MCF 10A (cell line): ENCODE measurements at regions of chr18 and their contacts with region 1.

Region 1: DNA sequence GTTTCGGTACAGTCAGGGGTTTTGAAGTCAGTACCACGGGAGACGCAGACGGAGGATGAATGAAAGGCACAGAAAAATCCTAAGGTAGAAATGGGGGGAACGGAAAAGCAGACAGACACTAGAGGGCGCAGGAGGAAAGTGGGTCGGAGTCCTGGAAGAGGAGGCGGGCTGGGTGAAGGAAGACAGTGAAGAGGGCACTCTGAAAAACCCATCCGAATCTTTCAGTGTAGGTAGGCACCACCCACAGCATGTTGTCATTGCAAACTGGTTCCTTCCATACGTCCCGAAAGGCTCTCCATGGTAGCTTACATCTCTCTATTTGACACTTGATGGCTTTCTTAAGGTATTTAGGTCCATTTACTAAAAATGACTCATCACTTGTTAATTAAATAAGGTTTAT is 18.5 kb upstream of the ZNF236 start:
- DNase-seq: peak; percentile 84
- H3K4me3 Mint-ChIP-seq: no peak overlapping the region
- H3K27ac Mint-ChIP-seq: no peak overlapping the region
- H3K4me1 Mint-ChIP-seq: peaks cover 29% of the 10 kb centered on the region
- H3K27me3 Mint-ChIP-seq: no peaks in the 10 kb centered on the region
- CTCF ChIP-seq: peak; percentile 74

Region 2: DNA sequence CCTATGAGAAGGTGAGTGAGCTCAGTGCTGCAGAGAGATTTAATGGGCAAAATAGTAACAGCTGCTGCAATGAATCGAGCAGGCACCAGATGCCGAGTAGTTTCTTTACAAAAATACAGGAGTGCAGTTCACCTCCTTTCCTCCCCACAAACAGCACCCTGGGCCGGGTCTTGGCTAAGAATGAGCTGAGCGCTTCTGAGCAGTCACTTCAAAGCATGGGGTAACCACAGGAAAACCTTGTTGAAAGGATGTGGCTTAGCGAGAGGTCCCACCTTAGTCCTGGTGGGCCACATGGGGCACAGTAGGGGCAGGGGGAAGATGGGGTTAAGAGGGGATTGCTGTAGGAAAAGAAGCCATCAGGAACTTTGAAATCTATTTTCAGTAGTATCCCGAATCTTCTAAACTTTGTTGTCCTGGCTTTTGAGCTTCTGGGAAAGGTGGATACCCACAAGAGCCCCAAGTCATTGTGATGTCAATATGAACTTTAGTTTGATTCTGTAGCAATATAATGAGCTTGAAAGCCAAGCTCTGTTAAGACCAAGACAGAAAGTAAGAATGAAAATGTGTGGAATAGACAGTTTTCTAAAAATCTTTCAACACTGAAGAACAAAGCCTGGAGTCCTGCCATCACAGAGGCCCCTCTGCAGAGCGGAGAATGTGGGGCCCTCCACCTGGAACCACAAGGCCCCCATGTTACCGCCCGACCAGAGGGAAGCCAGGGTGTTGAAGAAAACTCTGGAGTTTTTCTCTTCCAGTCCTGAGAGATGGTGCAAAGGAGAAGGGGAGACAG is 82.4 kb before region 1 on chr18:
- CTCF ChIA-PET with region 1: no interaction called
- POLR2A ChIA-PET with region 1: no interaction called
- intact Hi-C with region 1: no loop called
- DNase-seq: no peak
- H3K4me3 Mint-ChIP-seq: no peak overlapping the region
- H3K27ac Mint-ChIP-seq: no peak overlapping the region
- H3K4me1 Mint-ChIP-seq: no peaks in the 10 kb centered on the region
- H3K27me3 Mint-ChIP-seq: no peaks in the 10 kb centered on the region
- CTCF ChIP-seq: no peak

Region 3: GRCh38 chr18:76791106-76791505 is 12.7 kb before region 1 on chr18:
- CTCF ChIA-PET with region 1: interaction called, 57 read pairs
- POLR2A ChIA-PET with region 1: interaction called, 3 read pairs
- intact Hi-C with region 1: no loop called
- DNase-seq: no peak
- H3K4me3 Mint-ChIP-seq: no peak overlapping the region
- H3K27ac Mint-ChIP-seq: no peak overlapping the region
- H3K4me1 Mint-ChIP-seq: peaks cover 4% of the 10 kb centered on the region
- H3K27me3 Mint-ChIP-seq: peaks cover 2% of the 10 kb centered on the region
- CTCF ChIP-seq: no peak

Region 4: DNA sequence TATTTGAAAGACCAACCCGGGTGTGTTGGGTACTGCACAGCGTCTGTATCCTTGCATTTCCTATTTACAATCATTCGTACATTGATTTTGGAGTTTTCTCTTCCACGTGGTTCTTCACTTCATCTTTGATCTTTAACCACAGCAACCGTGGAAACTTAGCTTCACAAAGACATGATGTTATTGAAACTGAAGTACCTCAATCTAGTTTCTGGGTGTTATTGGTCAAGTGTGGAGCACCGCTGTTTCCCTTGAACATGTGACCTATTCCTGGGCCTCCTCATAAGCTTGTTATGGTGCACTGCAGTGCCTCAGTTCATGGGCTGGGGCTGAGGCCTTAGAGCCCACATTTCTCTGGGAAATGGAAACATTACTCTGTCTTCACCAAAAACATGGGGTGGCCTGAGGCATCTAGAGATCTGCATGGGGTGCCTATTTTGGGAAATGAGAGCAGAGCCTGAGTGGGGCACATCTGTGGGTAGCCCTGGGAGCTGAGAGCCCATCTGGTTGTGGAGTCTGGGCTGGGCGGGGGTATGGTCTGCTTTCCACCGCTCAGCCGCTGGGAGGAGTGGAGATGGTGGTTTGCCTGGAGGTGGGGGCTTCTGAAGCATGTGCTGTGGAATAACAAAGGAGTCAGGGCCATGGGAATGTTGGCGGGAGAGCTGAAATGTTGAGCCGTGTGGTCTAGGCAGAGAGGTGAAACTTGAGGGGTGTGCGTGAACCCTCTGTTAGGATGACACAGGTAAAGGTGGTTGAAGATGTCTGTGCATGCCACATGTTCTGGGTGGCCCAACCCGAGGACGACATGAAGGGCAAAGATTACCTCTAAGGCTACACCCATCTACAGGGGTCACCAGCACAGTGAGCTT is 55.9 kb after region 1 on chr18:
- CTCF ChIA-PET with region 1: interaction called, 27 read pairs
- POLR2A ChIA-PET with region 1: no interaction called
- intact Hi-C with region 1: no loop called
- DNase-seq: no peak
- H3K4me3 Mint-ChIP-seq: no peak overlapping the region
- H3K27ac Mint-ChIP-seq: peak overlapping the region; percentile 67
- H3K4me1 Mint-ChIP-seq: no peaks in the 10 kb centered on the region
- H3K27me3 Mint-ChIP-seq: no peaks in the 10 kb centered on the region
- CTCF ChIP-seq: no peak

Region 5: GRCh38 chr18:76903386-76903785 is 99.6 kb after region 1 on chr18:
- CTCF ChIA-PET with region 1: interaction called, 12 read pairs
- POLR2A ChIA-PET with region 1: interaction called, 3 read pairs
- intact Hi-C with region 1: no loop called
- DNase-seq: no peak
- H3K4me3 Mint-ChIP-seq: no peak overlapping the region
- H3K27ac Mint-ChIP-seq: peak overlapping the region; percentile 8
- H3K4me1 Mint-ChIP-seq: no peaks in the 10 kb centered on the region
- H3K27me3 Mint-ChIP-seq: no peaks in the 10 kb centered on the region
- CTCF ChIP-seq: no peak

Region 6: DNA sequence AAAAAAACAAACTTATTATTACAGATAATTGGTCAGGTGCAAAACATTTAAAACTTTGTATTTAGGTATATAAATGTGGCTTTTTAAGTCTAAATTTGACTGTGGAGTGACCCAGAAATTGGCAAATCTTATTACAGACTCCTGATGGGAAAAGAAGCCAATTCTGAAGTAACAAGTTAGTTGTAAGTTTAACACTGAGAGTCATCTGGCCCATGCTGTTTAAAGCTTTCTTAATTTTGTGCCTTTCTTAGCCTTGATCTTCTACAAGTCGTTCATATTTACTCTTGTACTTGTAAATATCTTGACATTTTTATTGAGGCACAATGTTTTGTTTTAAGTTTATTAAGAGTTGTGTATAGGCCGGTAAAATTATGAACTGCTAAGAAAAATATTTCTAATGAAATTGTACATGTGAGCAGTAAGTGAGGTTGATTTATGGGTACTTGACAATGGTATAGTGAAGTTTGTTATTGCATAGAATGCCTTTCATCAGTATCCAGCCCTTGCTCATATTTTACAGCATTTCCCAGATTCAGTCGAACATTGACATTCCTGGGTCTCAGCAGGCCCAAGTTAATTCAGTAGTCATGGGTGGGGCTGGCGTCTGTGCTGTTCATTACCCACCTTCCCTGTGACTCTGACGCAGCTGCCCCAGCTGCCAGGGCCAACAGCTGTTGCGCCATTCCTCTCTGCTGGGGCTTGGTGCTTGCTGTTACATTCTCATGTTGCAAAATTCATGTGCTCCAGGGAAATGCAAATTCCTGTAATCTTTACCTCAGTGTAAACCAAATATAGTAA is 139.9 kb after region 1 on chr18:
- CTCF ChIA-PET with region 1: interaction called, 10 read pairs
- POLR2A ChIA-PET with region 1: interaction called, 3 read pairs
- intact Hi-C with region 1: no loop called
- DNase-seq: peak; percentile 76
- H3K4me3 Mint-ChIP-seq: no peak overlapping the region
- H3K27ac Mint-ChIP-seq: peak overlapping the region; percentile 79
- H3K4me1 Mint-ChIP-seq: no peaks in the 10 kb centered on the region
- H3K27me3 Mint-ChIP-seq: no peaks in the 10 kb centered on the region
- CTCF ChIP-seq: no peak

Region 7: DNA sequence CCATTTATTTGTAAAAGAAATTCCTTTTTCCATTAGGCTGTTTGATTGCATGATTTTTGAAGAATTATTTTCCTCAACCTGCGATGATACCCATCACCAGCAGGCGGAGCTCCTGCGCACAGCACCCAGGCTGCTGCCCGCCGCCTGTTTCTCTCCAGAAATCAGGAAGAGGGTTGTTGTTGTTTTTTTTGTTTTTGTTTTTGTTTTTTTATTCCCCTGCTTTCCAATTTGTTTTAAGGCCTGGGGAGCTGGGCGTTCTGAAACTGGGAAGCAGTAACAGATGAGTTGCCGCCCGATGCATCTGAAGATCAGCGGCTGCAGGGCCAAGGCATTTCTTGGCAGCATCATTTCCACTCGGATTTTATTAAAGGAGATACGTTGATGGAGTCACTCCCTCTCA is 196.7 kb after region 1 on chr18:
- CTCF ChIA-PET with region 1: interaction called, 11 read pairs
- POLR2A ChIA-PET with region 1: no interaction called
- intact Hi-C with region 1: no loop called
- DNase-seq: peak; percentile 52
- H3K4me3 Mint-ChIP-seq: no peak overlapping the region
- H3K27ac Mint-ChIP-seq: no peak overlapping the region
- H3K4me1 Mint-ChIP-seq: no peaks in the 10 kb centered on the region
- H3K27me3 Mint-ChIP-seq: peaks cover 7% of the 10 kb centered on the region
- CTCF ChIP-seq: peak; percentile 89